ENCODE measurements at regions of chr11 and their contacts with region 1.

Region 1: GRCh38 chr11:91129596-91129995 is 906.7 kb upstream of the CHORDC1 start:
- DNase-seq: no peak
- H3K4me3 ChIP-seq: no peak overlapping the region
- H3K27ac ChIP-seq: no peak overlapping the region
- H3K4me1 ChIP-seq: no peaks in the 10 kb centered on the region
- H3K27me3 ChIP-seq: no peaks in the 10 kb centered on the region
- CTCF ChIP-seq: no peak
- EP300 ChIP-seq: no peak
- POLR2A ChIP-seq: no peak

Region 2: DNA sequence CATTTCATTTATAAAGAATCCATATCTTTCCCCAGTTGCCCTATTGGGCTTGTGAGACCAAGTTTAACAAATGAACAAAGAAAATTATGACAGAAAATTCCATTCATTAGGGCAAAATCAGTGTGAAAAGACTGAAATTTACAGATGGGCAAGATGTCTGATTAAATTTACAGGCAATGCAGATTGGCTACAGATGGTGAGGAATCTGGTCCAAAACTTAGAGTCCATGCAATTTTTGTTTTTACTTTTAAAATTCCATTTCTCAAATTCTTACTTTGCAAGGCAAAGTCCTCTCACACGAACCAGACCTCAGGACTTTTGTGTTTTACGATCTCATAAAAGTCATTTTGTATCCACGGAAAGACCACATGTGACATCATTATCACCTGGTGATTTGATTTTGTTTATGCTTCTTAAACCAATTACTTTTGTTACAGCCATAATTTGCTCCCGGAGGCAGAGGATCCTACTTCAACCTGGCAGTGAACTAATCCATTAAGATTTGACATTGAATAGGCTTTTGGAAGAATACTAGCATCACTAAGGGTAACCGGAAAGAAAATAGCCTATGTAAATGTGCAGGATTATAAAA is 63.0 kb before region 1 on chr11:
- in situ Hi-C with region 1: no loop called
- intact Hi-C with region 1: no loop called
- DNase-seq: no peak
- H3K4me3 ChIP-seq: no peak overlapping the region
- H3K27ac ChIP-seq: no peak overlapping the region
- H3K4me1 ChIP-seq: no peaks in the 10 kb centered on the region
- H3K27me3 ChIP-seq: no peaks in the 10 kb centered on the region
- CTCF ChIP-seq: no peak
- EP300 ChIP-seq: no peak
- POLR2A ChIP-seq: no peak

Region 3: GRCh38 chr11:91187314-91187713 is 57.7 kb after region 1 on chr11:
- in situ Hi-C with region 1: loop called in 1 of 4 experiments (anchors 10 kb)
- intact Hi-C with region 1: no loop called
- DNase-seq: no peak
- H3K4me3 ChIP-seq: no peak overlapping the region
- H3K27ac ChIP-seq: no peak overlapping the region
- H3K4me1 ChIP-seq: no peaks in the 10 kb centered on the region
- H3K27me3 ChIP-seq: no peaks in the 10 kb centered on the region
- CTCF ChIP-seq: no peak
- EP300 ChIP-seq: no peak
- POLR2A ChIP-seq: no peak